ENCODE measurements at regions of chr12 and their contacts with region 1.

Region 1: DNA sequence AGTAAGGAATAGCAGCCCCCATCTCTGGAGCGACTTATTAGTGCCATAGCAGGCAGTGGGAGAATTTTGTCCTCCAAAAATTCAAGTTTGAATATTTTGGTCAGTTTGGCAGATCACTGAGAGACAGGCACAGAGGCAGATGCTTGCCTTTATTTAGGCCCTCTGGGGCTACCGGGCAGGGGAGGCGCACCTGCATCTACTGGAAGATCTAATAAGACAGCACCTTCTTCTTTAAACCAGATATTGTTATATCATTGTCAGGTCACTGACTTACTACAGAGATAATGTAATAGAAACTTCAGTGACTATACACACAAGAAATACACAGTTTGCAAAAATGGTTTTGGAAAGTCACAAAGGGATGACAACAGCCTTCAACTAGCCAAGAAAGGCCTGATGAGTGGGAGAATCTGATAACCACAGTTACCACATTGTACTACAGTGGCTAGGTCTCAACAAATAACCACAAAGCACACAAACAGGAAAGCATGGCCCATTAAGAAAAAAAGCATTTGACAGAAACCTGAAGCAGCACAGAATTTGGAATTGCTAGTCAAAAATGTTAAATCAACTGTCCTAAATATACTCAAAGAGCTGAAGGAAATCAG is 56.8 kb downstream of the CDK17 start:
- DNase-seq: no peak
- ATAC-seq: peak; percentile 63
- H3K4me3 Mint-ChIP-seq: no peak overlapping the region
- H3K27ac Mint-ChIP-seq: peak overlapping the region; percentile 33
- H3K4me1 Mint-ChIP-seq: peaks cover 44% of the 10 kb centered on the region
- H3K27me3 Mint-ChIP-seq: no peaks in the 10 kb centered on the region

Region 2: DNA sequence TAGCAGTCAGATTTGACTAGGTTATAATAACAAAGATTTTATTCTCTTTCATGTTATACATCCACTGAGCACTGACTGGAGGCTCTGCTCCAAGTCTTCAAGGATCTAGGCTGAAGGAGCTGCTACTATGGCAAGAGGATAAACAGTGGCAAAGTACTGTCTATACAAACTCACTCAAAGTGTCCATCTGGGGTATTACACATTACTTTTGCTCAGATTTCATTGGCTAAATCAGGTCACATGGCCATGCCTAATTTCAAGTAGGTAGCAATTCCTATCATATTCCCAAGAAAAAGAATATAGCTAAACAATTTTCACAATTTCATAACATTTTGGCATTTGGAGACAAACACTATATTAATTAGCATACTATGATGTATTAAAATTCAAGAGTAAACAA is 15.9 kb after region 1 on chr12:
- CTCF ChIA-PET with region 1: interaction called, 11 read pairs
- POLR2A ChIA-PET with region 1: no interaction called
- intact Hi-C with region 1: no loop called
- DNase-seq: no peak
- ATAC-seq: no peak
- H3K4me3 Mint-ChIP-seq: no peak overlapping the region
- H3K27ac Mint-ChIP-seq: no peak overlapping the region
- H3K4me1 Mint-ChIP-seq: peaks cover 73% of the 10 kb centered on the region
- H3K27me3 Mint-ChIP-seq: no peaks in the 10 kb centered on the region

Region 3: GRCh38 chr12:96383991-96384390 is 40.5 kb after region 1 on chr12:
- CTCF ChIA-PET with region 1: interaction called, 7 read pairs
- POLR2A ChIA-PET with region 1: no interaction called
- intact Hi-C with region 1: loop called in 1 of 2 experiments (anchors 5 kb)
- DNase-seq: no peak
- ATAC-seq: no peak
- H3K4me3 Mint-ChIP-seq: no peak overlapping the region
- H3K27ac Mint-ChIP-seq: no peak overlapping the region
- H3K4me1 Mint-ChIP-seq: peaks cover 76% of the 10 kb centered on the region
- H3K27me3 Mint-ChIP-seq: no peaks in the 10 kb centered on the region

Measured in activated CD4-positive, alpha-beta T cell treated with anti-CD3 and anti-CD28 coated beads for 36 hours (primary cell).